H1 (cell line): ENCODE measurements at regions of chr3 and their contacts with region 1.

Region 1: GRCh38 chr3:142866841-142867631 is 21.8 kb downstream of the PCOLCE2 start:
- DNase-seq: peak; percentile 76 to 84
- H3K4me3 ChIP-seq: peak overlapping the region in 2 of 4 experiments; percentile 23 to 48; a peak in 2 of 8 replicates
- H3K27ac ChIP-seq: no peak overlapping the region
- H3K4me1 ChIP-seq: peaks cover 6 to 27% (median 15%) of the 10 kb centered on the region in 4 experiments
- H3K27me3 ChIP-seq: no peaks in the 10 kb centered on the region
- CTCF ChIP-seq: peak in 2 of 3 experiments; percentile 53 to 71; a peak in 3 of 4 replicates
- EP300 ChIP-seq: no peak; a peak in 1 of 3 replicates
- POLR2A ChIP-seq: peak in 1 of 2 experiments; percentile 38; a peak in 1 of 3 replicates
- RAD21 ChIP-seq: peak; percentile 25 to 38

Region 2: GRCh38 chr3:142802891-142803290 is 64.1 kb before region 1 on chr3:
- CTCF ChIA-PET with region 1: no interaction called
- POLR2A ChIA-PET with region 1: no interaction called
- DNase-seq: no peak
- H3K4me3 ChIP-seq: no peak overlapping the region
- H3K27ac ChIP-seq: no peak overlapping the region
- H3K4me1 ChIP-seq: no peaks in the 10 kb centered on the region; a peak in 1 of 7 replicates
- H3K27me3 ChIP-seq: no peaks in the 10 kb centered on the region
- CTCF ChIP-seq: no peak
- EP300 ChIP-seq: no peak
- POLR2A ChIP-seq: no peak
- RAD21 ChIP-seq: no peak

Region 3: DNA sequence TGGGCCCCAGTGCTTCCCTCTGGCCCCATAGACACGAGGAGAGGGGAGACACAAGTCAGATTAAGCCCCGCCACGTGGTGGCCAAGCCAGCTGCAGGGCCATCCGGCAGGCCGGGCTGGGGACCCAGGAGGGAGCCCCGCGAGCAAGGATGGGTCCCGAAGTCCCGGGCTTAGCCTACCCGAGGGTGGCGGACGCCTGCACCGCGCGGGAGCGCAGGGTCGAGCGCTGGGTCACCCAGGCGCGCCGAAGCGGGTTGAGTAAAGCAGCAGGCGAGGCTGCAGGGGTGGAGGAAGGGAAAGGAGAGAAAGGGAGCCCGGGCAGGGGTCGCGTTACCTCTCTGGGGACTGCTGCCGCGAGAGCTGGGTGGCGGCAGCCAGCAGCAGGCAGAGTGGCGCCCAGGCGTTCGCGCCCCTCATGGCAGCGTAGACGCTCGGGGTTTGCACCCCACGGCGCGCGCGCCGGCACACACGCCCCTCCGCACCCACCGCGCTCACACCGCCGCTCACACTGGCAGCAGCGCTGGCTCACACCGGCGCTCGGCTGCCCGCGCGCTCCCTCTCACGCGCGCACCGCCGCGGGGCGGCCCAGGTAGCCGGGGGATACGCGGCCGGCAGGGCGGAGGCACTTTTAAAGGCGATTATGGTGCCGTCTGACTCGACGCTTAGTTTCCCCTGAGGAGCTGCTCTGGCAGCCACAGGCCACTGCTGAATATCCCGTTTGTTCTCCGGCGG is 21.6 kb after region 1 on chr3 and contains the start of gene PCOLCE2:
- CTCF ChIA-PET with region 1: interaction called, 10 read pairs
- POLR2A ChIA-PET with region 1: interaction called, 11 read pairs
- DNase-seq: peak in 1 of 2 experiments; percentile 86
- H3K4me3 ChIP-seq: peak within 1 kb of the TSS; percentile 47 to 71 (median 64)
- H3K27ac ChIP-seq: no peak within 1 kb of the TSS
- H3K4me1 ChIP-seq: peaks cover 0 to 4% (median 2%) of the 10 kb centered on the region in 4 experiments; a peak in 3 of 7 replicates
- H3K27me3 ChIP-seq: peaks cover 0 to 8% (median 5%) of the 10 kb centered on the region in 4 experiments; a peak in 5 of 7 replicates
- CTCF ChIP-seq: no peak
- EP300 ChIP-seq: no peak
- POLR2A ChIP-seq: peak; percentile 67 to 87
- RAD21 ChIP-seq: 0 out of 4 replicates have a peak, but pooled peaks of 1 of the 2 experiments have one; percentile 0
- total RNA-seq, gene PCOLCE2: 11.6 and 12.6 TPM in 2 replicates

Region 4: DNA sequence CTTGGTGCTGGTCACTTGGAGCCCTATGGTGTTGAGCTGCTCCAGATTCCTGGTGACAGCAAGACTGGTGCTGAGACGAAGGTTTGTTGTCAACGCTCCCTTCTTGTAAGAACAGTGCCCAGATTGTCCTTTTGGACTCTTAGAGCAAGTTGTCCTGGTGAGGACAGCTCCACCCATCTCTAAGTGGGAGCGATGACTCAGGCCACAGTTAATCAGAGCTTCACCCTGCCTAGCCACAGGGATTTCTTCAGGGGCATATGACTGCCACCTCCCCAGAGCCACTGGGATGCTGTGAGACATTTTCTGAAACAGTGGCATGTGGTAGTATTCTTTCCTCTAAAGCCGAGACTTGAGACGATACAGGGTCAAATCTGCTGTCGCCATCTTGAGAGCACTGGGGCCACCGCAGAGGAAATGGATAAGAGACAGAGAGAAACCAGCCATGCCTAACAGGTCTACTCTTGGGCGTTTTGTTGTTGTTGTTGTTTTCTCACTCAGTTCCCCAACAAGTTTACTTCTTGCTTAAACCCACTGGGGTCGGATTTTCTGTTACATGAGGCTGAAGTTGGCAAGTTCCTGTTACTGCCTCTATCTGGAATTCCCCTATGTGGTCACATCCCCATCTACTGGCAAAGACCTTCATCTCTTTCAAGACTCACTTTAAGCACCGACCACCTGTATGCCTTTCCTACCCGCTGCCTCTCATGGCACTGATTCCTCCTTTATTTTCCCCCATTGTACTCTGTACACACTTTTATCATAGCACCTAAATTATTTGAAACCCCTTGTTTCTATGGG is 37.8 kb after region 1 on chr3:
- CTCF ChIA-PET with region 1: interaction called, 14 read pairs
- POLR2A ChIA-PET with region 1: no interaction called
- DNase-seq: peak in 1 of 2 experiments; percentile 50
- H3K4me3 ChIP-seq: no peak overlapping the region
- H3K27ac ChIP-seq: no peak overlapping the region
- H3K4me1 ChIP-seq: no peaks in the 10 kb centered on the region
- H3K27me3 ChIP-seq: no peaks in the 10 kb centered on the region
- CTCF ChIP-seq: peak in 2 of 3 experiments; percentile 73 to 75; a peak in 3 of 4 replicates
- EP300 ChIP-seq: no peak
- POLR2A ChIP-seq: no peak
- RAD21 ChIP-seq: peak; percentile 92